ENCODE measurements at regions of chr1 and their contacts with region 1.

Region 1: GRCh38 chr1:146007506-146008133 is 11.2 kb upstream of the TXNIP start:
- DNase-seq: no peak
- H3K4me3 ChIP-seq: no peak overlapping the region
- H3K27ac ChIP-seq: peak overlapping the region in 1 of 2 experiments; percentile 42; a peak in 1 of 4 replicates
- H3K4me1 ChIP-seq: peaks cover 2 to 3% of the 10 kb centered on the region in 2 experiments; a peak in 2 of 4 replicates
- H3K27me3 ChIP-seq: no peaks in the 10 kb centered on the region
- CTCF ChIP-seq: no peak
- EP300 ChIP-seq: no peak
- RAD21 ChIP-seq: no peak

Region 2: DNA sequence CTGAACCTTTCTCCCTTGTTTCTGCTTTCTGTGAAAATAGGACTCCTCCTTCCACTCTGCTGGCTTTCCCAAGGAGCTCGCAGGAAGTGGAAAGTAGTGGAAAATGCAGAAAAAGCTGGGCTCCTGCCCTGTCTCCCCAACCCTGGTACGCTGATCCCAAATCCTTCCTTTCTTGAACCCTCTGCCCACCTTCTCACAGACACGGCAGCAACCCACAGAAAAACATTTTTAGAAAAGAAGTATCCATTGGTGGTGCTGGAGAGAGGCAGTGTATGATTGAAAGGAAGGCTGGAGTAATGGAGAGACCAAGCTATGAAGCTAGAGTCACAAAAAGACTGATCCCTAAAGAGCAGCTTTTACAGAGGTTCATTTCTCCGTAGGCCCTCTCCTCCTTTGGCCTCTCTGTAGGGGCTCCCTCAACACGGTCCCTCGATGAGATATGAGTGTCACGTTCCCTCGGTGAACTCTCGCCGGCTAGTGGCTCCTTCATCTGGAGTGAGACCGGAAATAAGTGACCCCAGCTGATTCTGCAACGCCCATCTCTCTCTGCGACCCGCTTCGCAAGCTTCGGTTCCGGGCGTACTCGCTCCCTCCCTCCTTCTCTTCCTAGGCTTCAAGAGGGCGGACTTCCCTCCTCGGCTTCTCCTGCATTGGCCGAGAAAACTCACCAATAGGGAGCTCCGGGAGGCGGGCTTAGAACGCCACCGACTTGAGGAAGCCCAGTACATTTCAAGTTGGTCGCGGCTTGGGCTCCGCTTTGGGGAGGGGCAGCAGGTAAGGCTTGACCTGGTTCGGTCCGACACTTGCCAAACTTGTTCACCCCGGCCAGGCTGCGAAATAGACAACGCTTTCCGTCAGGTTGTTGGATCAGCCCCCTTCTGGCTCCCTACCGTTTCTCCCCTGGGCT is 43.4 kb before region 1 on chr1 and contains the starts of genes ANKRD34A and POLR3GL:
- CTCF ChIA-PET with region 1: interaction called, 10 read pairs
- POLR2A ChIA-PET with region 1: no interaction called
- DNase-seq: peak; percentile 86
- H3K4me3 ChIP-seq: peak within 1 kb of the TSS; percentile 77 to 78
- H3K27ac ChIP-seq: peak within 1 kb of the TSS; percentile 83 to 98
- H3K4me1 ChIP-seq: peaks cover 19 to 40% of the 10 kb centered on the region in 2 experiments
- H3K27me3 ChIP-seq: no peaks in the 10 kb centered on the region
- CTCF ChIP-seq: no peak
- EP300 ChIP-seq: no peak
- RAD21 ChIP-seq: no peak
- polyA plus RNA-seq, gene ANKRD34A: 2.6 and 3.6 TPM in 2 replicates
- polyA plus RNA-seq, gene POLR3GL: 15.8 and 17.3 TPM in 2 replicates

Region 3: GRCh38 chr1:145985502-145986439 is 21.8 kb before region 1 on chr1:
- CTCF ChIA-PET with region 1: interaction called, 187 read pairs
- POLR2A ChIA-PET with region 1: no interaction called
- DNase-seq: no peak
- H3K4me3 ChIP-seq: no peak overlapping the region
- H3K27ac ChIP-seq: peak overlapping the region; percentile 51 to 69; a peak in 3 of 4 replicates
- H3K4me1 ChIP-seq: peaks cover 8 to 14% of the 10 kb centered on the region in 2 experiments; a peak in 3 of 4 replicates
- H3K27me3 ChIP-seq: no peaks in the 10 kb centered on the region
- CTCF ChIP-seq: no peak
- EP300 ChIP-seq: no peak
- RAD21 ChIP-seq: no peak

Region 4: DNA sequence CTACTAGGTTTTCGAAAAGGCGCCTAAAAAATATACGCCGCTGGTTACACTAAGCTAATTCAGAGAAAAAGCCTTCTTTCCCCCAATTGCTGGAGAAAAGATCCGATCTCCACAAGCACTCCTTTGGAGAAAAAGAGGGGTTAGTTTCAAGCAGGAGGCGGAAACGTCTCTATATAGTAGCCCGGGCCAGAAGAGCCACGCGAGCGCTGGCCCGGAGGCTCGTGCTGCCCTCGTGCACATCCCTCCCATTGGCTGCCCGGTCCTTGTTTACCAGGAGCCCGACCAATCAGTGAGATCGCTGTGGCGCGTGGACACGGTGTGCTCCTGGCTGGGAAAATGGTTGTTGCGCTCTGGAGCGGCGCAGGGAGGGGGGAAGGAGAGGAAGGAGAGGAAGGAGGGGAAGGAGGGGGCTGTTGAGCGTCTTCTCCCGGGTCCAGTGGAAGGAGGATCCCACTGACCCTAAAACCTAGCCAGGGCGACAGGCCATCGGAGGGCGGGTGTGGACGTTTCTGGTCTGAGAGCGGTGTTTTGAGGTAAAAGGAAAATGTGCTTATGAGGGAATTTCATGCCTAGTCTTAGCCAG is 11.1 kb before region 1 on chr1 and contains the start of gene TXNIP:
- CTCF ChIA-PET with region 1: interaction called, 35 read pairs
- POLR2A ChIA-PET with region 1: no interaction called
- DNase-seq: peak; percentile 95
- H3K4me3 ChIP-seq: peak within 1 kb of the TSS; percentile 64 to 90
- H3K27ac ChIP-seq: peak within 1 kb of the TSS; percentile 44 to 98
- H3K4me1 ChIP-seq: peaks cover 14 to 45% of the 10 kb centered on the region in 2 experiments; a peak in 3 of 4 replicates
- H3K27me3 ChIP-seq: no peaks in the 10 kb centered on the region
- CTCF ChIP-seq: no peak
- EP300 ChIP-seq: peak; percentile 55 to 59; a peak in 3 of 4 replicates
- RAD21 ChIP-seq: no peak
- polyA plus RNA-seq, gene TXNIP: 44.6 and 77.3 TPM in 2 replicates

Region 5: GRCh38 chr1:146020058-146021049 is 12.7 kb after region 1 on chr1:
- CTCF ChIA-PET with region 1: interaction called, 18 read pairs
- POLR2A ChIA-PET with region 1: no interaction called
- DNase-seq: no peak
- H3K4me3 ChIP-seq: no peak overlapping the region
- H3K27ac ChIP-seq: no peak overlapping the region
- H3K4me1 ChIP-seq: peaks cover 2 to 9% of the 10 kb centered on the region in 2 experiments; a peak in 3 of 4 replicates
- H3K27me3 ChIP-seq: no peaks in the 10 kb centered on the region
- CTCF ChIP-seq: no peak
- EP300 ChIP-seq: no peak
- RAD21 ChIP-seq: no peak

Measured in SK-N-SH (cell line).